Sciatic nerve (tissue), 2 donors: ENCODE measurements at regions of chr10 and their contacts with region 1.

Region 1: DNA sequence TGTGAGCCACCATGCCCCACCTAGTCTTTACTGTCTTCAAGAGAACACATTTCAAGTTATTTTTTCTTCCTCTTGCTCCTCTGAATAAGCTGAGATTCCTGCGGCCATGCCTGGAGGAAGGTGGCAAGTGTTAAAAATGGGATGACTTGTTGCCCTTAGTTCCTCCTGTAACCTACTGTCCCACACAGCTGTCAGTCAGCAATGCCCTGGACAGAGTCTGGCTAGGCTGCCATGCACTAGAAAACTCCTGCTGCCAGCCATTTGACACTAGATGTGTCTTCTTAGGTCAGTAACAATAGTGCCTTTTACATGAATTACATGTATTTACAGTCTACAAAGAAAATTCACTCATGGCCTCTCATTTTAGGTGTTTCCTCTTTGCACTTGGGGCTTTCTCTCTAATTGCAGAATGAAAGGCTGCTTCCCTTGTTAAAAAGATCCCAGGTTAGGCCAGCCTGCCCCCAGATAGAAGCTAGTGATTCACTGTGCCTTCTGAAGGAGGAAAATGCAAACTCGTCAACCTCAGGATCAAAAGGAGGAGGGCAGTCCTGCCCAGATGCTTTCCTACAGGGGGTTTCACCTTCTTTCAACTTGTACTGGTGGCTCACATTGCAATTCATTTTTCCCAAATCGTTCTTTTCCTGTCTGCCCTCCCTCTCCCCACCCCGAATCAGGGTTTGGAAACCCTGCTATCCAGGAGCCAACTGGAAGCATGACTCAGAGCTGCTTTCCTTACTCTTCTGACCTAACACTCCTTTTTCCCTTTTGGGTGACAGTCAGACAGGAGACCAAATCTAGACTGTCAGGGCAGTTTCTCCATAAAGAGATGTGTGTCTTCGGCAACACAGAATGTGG is 136.6 kb downstream of the SPAG6 start:
- DNase-seq: no peak
- ATAC-seq: no peak

Region 2: GRCh38 chr10:22518167-22518724 is 36.3 kb after region 1 on chr10:
- intact Hi-C with region 1: loop called (anchors 2 kb)
- DNase-seq: no peak
- ATAC-seq: no peak

Region 3: DNA sequence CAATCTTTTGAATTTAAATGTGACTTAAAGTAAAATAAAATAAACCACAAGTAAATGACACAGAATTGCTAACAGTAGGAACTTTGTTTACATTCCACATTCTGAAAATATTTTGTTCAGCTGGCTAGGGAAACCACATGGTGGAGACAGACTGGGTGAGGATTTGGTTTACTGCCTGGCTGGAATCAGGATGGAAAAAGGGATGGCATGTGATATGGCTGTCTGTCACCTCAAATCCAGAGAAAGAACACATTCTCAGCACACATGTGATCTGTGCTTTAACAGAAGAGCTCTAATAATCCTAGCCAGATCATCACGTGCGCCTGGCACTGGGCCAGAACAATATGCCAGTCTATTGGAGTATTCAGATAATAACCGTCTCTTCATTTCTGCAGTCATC is 323.4 kb after region 1 on chr10:
- intact Hi-C with region 1: no loop called
- DNase-seq: peak; percentile 65
- ATAC-seq: peak; percentile 45